ENCODE measurements at regions of chr15 and their contacts with region 1.

Region 1: GRCh38 chr15:72249142-72249810 is 18.3 kb upstream of the PKM start:
- DNase-seq: no peak
- H3K4me3 Mint-ChIP-seq: no peak overlapping the region
- H3K27ac Mint-ChIP-seq: no peak overlapping the region
- H3K4me1 Mint-ChIP-seq: no peaks in the 10 kb centered on the region
- H3K27me3 Mint-ChIP-seq: no peaks in the 10 kb centered on the region

Region 2: GRCh38 chr15:72184165-72184889 is 64.9 kb before region 1 on chr15:
- CTCF ChIA-PET with region 1: no interaction called
- POLR2A ChIA-PET with region 1: no interaction called
- DNase-seq: no peak
- H3K4me3 Mint-ChIP-seq: no peak overlapping the region
- H3K27ac Mint-ChIP-seq: no peak overlapping the region
- H3K4me1 Mint-ChIP-seq: no peaks in the 10 kb centered on the region
- H3K27me3 Mint-ChIP-seq: peaks cover 49% of the 10 kb centered on the region

Region 3: DNA sequence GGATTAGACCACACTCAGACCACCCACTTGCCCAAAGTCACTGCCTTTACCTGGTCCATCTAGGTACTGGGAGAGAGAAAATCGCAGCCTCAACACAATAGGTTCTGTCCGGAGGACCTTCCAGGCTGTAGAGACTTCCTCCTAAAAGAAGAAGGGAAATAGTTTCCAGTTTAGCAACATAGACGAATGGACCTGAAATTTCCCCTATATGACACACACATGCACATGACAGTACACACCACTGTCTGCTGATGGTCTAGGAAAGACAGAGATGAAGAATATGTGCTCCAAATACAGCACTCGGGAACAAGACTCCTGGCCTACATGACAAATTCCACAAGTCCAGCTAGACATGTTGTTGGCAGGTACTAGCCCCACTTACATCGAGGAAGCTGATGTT is 15.8 kb after region 1 on chr15:
- CTCF ChIA-PET with region 1: interaction called, 10 read pairs
- POLR2A ChIA-PET with region 1: no interaction called
- DNase-seq: no peak
- H3K4me3 Mint-ChIP-seq: no peak overlapping the region
- H3K27ac Mint-ChIP-seq: no peak overlapping the region
- H3K4me1 Mint-ChIP-seq: peaks cover 2% of the 10 kb centered on the region
- H3K27me3 Mint-ChIP-seq: no peaks in the 10 kb centered on the region

Region 4: GRCh38 chr15:72375847-72376581 is 126.7 kb after region 1 on chr15 and contains the start of gene HEXA:
- CTCF ChIA-PET with region 1: no interaction called
- POLR2A ChIA-PET with region 1: no interaction called
- DNase-seq: peak; percentile 98
- H3K4me3 Mint-ChIP-seq: peak within 1 kb of the TSS; percentile 95
- H3K27ac Mint-ChIP-seq: peak within 1 kb of the TSS; percentile 99
- H3K4me1 Mint-ChIP-seq: peaks cover 41% of the 10 kb centered on the region
- H3K27me3 Mint-ChIP-seq: no peaks in the 10 kb centered on the region
- total RNA-seq, gene HEXA: 83.6 to 94.1 TPM

Measured in activated CD4-positive, alpha-beta T cell treated with anti-CD3 and anti-CD28 coated beads, Interleukin-2, amount 10 ng/mL, durations not matched to agents 7 days and 5 days (primary cell).